Caco-2 (cell line): ENCODE measurements at regions of chr14 and their contacts with region 1.

Region 1: DNA sequence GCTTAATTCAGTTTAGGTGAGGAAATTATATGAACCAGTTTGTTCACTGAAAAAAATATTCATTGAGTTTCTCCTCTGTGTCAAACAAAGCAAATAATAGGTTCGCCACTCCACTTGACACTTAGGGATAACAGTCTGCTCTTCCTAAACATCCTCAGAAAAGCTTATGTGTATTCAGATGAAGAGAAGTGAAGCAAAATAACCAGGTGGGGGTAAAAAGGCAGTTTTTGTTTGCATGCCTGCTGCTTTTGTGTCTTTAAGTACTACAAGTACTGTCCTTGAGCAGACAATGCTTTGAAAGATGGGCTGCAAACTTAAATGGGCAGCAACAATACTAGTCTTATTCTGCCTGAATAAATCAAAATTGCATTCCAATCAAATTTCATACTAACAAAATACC is 910.7 kb upstream of the MDGA2 start:
- DNase-seq: no peak
- H3K4me3 ChIP-seq: no peak overlapping the region
- H3K4me3 Mint-ChIP-seq: no peak overlapping the region
- H3K27ac Mint-ChIP-seq: no peak overlapping the region
- H3K4me1 ChIP-seq: no peaks in the 10 kb centered on the region
- H3K4me1 Mint-ChIP-seq: no peaks in the 10 kb centered on the region
- H3K27me3 ChIP-seq: no peaks in the 10 kb centered on the region
- H3K27me3 Mint-ChIP-seq: peaks cover 4% of the 10 kb centered on the region
- CTCF ChIP-seq: no peak

Region 2: GRCh38 chr14:48628870-48629269 is 42.8 kb after region 1 on chr14:
- CTCF ChIA-PET with region 1: no interaction called
- POLR2A ChIA-PET with region 1: no interaction called
- intact Hi-C with region 1: loop called (anchors 5 kb)
- DNase-seq: no peak
- H3K4me3 ChIP-seq: no peak overlapping the region
- H3K4me3 Mint-ChIP-seq: no peak overlapping the region
- H3K27ac Mint-ChIP-seq: no peak overlapping the region
- H3K4me1 ChIP-seq: no peaks in the 10 kb centered on the region
- H3K4me1 Mint-ChIP-seq: no peaks in the 10 kb centered on the region
- H3K27me3 ChIP-seq: no peaks in the 10 kb centered on the region
- H3K27me3 Mint-ChIP-seq: no peaks in the 10 kb centered on the region
- CTCF ChIP-seq: no peak

Region 3: GRCh38 chr14:48890333-48890732 is 304.2 kb after region 1 on chr14:
- CTCF ChIA-PET with region 1: no interaction called
- POLR2A ChIA-PET with region 1: no interaction called
- intact Hi-C with region 1: no loop called
- DNase-seq: no peak
- H3K4me3 ChIP-seq: no peak overlapping the region
- H3K4me3 Mint-ChIP-seq: no peak overlapping the region
- H3K27ac Mint-ChIP-seq: no peak overlapping the region
- H3K4me1 ChIP-seq: no peaks in the 10 kb centered on the region
- H3K4me1 Mint-ChIP-seq: no peaks in the 10 kb centered on the region
- H3K27me3 ChIP-seq: no peaks in the 10 kb centered on the region
- H3K27me3 Mint-ChIP-seq: no peaks in the 10 kb centered on the region
- CTCF ChIP-seq: no peak